HEK293 (cell line): ENCODE measurements at regions of chr12 and their contacts with region 1.

Region 1: DNA sequence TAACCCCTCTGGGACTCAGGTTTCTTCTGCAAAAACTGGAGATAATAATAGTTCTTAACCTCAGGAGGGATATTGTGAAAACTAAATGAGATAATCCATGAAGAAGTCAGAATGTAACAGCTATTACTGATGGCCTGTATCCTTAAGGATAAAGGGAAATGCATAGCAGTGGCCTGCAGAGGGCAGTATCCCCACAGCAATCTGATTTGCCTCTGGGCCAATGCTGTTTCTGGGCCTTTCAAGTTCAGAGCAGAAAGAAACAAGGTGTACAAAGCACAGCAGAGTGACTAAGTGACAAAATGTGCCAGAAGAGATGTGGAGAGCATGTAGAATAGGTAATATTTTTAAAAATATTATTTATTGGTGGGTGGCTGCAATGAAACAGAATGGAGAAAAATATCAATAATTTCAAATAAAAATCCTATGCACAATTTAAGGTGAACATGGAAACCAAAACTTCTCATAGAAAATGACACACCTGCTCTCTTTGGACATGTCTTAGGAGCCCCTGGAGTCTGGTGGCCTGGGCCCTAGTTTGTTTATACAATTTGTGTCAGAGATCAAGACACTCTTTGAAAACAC is 90.3 kb downstream of the C12orf75 start:
- H3K4me3 ChIP-seq: no peak overlapping the region
- H3K27ac ChIP-seq: no peak overlapping the region
- H3K4me1 ChIP-seq: no peaks in the 10 kb centered on the region
- CTCF ChIP-seq: peak; percentile 60; the same call in 1 of the 2 replicates

Region 2: GRCh38 chr12:105296116-105297089 is 124.3 kb before region 1 on chr12:
- CTCF ChIA-PET with region 1: no interaction called
- POLR2A ChIA-PET with region 1: no interaction called
- H3K4me3 ChIP-seq: no peak overlapping the region
- H3K27ac ChIP-seq: no peak overlapping the region
- H3K4me1 ChIP-seq: no peaks in the 10 kb centered on the region
- CTCF ChIP-seq: no peak

Region 3: GRCh38 chr12:105462831-105463230 is 42.1 kb after region 1 on chr12:
- CTCF ChIA-PET with region 1: no interaction called
- POLR2A ChIA-PET with region 1: no interaction called
- H3K4me3 ChIP-seq: no peak overlapping the region
- H3K27ac ChIP-seq: no peak overlapping the region
- H3K4me1 ChIP-seq: no peaks in the 10 kb centered on the region
- CTCF ChIP-seq: no peak

Region 4: DNA sequence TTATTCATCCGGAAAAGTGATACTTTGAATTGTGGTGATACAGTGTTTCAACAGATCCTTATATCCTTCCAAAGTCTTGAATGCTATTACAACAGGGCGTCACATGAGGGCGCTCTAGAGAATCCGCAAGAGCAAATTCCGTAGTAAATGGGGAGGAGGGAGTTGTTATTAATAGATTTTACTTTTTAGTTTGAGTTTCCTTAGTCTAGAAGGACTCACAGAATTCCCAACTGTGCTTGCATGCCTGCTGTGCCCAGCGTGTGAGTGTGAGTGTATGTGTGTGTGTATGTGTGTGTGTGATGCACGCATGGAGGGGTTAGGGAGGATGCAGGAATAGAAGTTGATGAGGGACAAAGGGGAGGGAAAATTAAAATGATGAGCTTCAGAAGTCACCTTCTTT is 285.0 kb after region 1 on chr12:
- CTCF ChIA-PET with region 1: interaction called, 23 read pairs
- POLR2A ChIA-PET with region 1: no interaction called
- H3K4me3 ChIP-seq: no peak overlapping the region
- H3K27ac ChIP-seq: peak overlapping the region; percentile 50; the same call in 1 of the 2 replicates
- H3K4me1 ChIP-seq: peaks cover 11% of the 10 kb centered on the region
- CTCF ChIP-seq: peak; percentile 15; the same call in 1 of the 2 replicates

Region 5: GRCh38 chr12:106149096-106149784 is 728.5 kb after region 1 on chr12:
- CTCF ChIA-PET with region 1: interaction called, 15 read pairs
- POLR2A ChIA-PET with region 1: no interaction called
- H3K4me3 ChIP-seq: no peak overlapping the region
- H3K27ac ChIP-seq: no peak overlapping the region
- H3K4me1 ChIP-seq: peaks cover 14% of the 10 kb centered on the region
- CTCF ChIP-seq: peak; percentile 53

Region 6: GRCh38 chr12:106223485-106224354 is 803.0 kb after region 1 on chr12:
- CTCF ChIA-PET with region 1: interaction called, 20 read pairs
- POLR2A ChIA-PET with region 1: no interaction called
- H3K4me3 ChIP-seq: no peak overlapping the region
- H3K27ac ChIP-seq: no peak overlapping the region
- H3K4me1 ChIP-seq: no peaks in the 10 kb centered on the region
- CTCF ChIP-seq: peak; percentile 82